Left ventricle myocardium superior (tissue), 1 donor: ENCODE measurements at regions of chr4 and their contacts with region 1.

Region 1: GRCh38 chr4:85147439-85148076 is 181.1 kb upstream of the WDFY3 start:
- DNase-seq: peak; percentile 69
- ATAC-seq: peak; percentile 79

Region 2: GRCh38 chr4:85369701-85370380 is 222.3 kb after region 1 on chr4:
- intact Hi-C with region 1: loop called (anchors 10 kb)
- DNase-seq: no peak
- ATAC-seq: no peak

Region 3: DNA sequence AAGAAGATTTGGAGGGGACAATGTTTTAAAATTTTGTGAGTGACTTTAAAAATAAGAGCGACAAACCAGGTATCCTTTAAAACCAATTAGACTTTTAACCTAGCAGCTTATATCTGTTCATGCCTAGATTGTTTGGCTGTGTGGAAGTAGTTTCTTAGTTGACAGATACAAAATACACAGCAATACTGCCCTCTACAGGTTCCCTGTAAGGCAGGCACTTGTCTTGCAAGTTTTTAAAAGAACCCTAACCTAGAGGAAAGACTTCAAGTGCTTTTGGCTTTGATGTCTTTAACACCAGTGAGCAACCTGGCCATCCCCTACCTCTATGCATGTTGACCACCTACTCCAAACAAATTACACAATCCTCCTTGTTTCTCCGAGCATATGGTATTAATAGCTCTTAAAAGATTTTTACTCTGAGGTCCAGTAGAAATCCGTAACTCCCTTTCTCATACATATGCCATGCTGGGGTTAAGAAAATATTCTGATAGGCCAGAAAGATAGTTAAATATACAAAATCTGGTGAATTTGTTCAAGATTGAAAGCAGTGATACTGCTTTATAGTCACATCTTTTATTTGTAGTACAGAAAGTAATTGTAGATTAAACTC is 600.4 kb after region 1 on chr4:
- intact Hi-C with region 1: loop called (anchors 5 kb)
- DNase-seq: no peak
- ATAC-seq: peak; percentile 84

Region 4: DNA sequence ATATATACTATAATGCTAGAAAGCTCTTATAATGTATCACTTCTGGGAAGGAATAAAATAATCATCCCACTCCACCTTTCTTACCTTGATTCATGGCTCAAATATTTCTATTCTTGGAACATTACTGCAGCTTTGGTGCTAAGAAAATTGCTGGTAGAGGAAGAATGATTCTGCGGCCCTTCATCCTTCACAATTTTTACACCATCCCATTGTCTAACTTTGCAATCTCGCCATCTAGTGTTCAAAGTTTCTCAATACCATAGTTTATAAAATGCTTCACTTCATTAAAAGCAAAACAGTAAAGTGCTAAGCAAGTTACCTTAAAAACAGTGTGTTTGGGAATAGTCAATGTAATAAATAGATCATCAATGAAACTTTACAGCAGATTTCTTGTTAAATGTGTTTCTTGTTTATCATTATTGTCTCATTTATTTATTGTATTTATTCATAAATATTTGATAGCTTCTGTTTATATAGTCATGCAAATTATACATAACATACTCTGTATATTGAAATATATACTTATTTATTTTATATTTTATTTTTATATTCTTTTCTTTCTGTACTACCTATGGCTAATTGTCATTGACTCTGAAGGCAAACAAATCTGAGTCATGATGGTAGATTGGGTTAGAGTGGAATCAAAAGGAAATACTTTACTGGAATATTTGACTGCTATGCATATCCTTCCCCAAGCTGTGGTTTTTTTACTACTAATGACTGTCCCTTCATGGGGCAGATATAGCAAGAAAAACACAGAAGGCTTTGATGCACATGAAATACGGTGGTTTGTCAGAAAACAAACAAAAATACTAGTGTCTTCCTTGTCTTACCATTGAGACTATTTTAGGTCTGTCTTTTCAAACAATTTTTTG is 821.6 kb after region 1 on chr4:
- intact Hi-C with region 1: loop called (anchors 10 kb)
- DNase-seq: no peak
- ATAC-seq: peak; percentile 47